HepG2 (cell line): ENCODE measurements at regions of chr1 and their contacts with region 1.

Region 1: DNA sequence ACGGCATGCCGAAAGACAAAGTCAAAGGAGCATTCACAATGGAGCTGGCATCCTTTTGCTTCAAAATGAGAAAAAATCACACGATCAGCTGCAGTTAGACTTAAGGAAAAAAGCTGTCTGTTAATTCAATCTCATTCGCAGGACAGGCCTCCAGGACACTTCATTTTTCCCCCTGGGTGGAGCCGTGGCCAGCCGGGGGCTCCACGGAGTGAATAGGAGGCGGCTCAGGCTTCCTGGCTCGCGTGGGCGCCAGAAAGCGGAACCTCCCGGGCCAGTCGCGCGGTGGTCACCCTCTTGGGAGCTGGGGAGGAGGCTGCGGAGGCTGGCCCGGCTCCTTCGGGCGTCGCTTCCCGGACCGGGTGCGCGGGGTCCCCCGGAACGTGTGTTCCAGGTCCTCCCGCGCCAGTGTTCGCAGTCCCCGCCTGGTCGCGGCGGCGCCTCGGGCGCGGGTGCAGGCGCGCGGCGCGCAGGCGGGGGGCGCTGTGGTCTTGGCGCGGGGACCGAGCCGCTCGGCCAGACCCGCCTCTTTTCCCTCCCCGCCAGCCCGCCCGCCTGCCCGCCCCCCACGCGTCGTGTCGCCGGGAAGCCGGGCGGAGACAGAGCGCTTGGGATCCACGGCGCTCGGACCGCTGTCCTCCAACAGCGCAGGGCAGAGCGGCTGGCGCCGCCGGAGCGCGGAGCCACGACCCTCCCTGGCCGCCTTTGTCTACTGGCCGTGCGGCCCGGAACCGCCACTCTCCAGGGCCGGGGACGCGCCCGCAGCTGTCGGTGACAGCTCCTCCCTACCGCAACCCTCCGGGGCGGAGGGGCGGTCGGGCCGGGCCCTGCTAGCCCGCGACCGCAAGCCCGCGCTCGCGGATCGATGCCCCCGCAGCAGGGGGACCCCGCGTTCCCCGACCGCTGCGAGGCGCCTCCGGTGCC is at the start of gene RHOU:
- DNase-seq: peak; percentile 20
- ATAC-seq: peak; percentile 90
- H3K4me3 ChIP-seq: peak within 1 kb of the TSS; percentile 85 to 94 (median 86)
- H3K27ac ChIP-seq: peak within 1 kb of the TSS; percentile 61
- H3K4me1 ChIP-seq: peaks cover 39% of the 10 kb centered on the region
- H3K27me3 ChIP-seq: peaks cover 2 to 12% of the 10 kb centered on the region in 2 experiments; a peak in 4 of 5 replicates
- CTCF ChIP-seq: peak; percentile 67
- EP300 ChIP-seq: 0 out of 4 replicates have a peak, but pooled peaks of 1 of the 2 experiments have one; percentile 16
- POLR2A ChIP-seq: peak; percentile 59 to 65
- RAD21 ChIP-seq: peak; percentile 95
- total RNA-seq, gene RHOU: 18.5 and 23.6 TPM in 2 replicates

Region 2: DNA sequence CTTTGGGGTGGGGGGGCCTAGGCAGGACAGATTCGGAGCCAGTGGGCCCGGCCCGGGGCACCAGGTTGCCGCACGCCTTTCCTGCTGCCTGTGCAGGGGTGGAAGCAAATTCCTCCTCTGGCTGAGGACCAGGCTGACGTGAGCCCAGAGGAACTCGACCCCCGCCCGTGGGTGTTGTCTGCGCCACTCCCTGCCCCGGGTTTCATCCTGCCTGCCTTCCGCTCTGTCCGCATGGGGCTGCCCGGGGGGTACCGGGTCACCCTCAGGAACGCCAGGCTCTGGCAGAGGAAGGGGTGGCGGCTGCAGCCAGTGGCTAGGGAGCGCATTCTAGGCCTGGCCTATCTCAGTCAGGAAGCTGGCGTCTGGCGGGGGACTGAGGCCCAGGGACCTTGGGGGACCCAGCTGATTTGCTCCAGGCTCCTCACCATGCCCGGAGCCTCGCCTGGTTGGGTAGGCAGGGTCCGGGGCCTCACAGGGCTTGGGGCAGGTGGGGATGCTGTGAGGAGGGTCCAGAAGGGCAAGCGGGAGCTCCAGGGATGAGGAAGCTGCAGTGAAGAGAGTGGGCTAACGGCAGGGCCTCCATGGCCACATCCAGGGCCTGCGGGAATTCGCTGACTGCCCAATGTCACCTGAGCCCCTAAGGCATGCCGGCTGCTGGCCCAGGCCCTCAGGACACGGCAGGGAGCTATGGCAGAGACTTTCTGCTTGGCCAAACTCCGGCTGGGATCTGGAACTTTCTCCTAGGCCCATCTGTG is 572.0 kb before region 1 on chr1:
- CTCF ChIA-PET with region 1: no interaction called
- POLR2A ChIA-PET with region 1: no interaction called
- in situ Hi-C with region 1: no loop called
- intact Hi-C with region 1: no loop called
- DNase-seq: no peak
- ATAC-seq: no peak
- H3K4me3 ChIP-seq: no peak overlapping the region; a peak in 1 of 6 replicates
- H3K27ac ChIP-seq: no peak overlapping the region
- H3K4me1 ChIP-seq: peaks cover 62% of the 10 kb centered on the region
- H3K27me3 ChIP-seq: no peaks in the 10 kb centered on the region; a peak in 1 of 5 replicates
- CTCF ChIP-seq: no peak
- EP300 ChIP-seq: no peak
- POLR2A ChIP-seq: no peak
- RAD21 ChIP-seq: no peak

Region 3: GRCh38 chr1:228664399-228664914 is 70.7 kb before region 1 on chr1:
- CTCF ChIA-PET with region 1: interaction called, 3 read pairs
- POLR2A ChIA-PET with region 1: no interaction called
- in situ Hi-C with region 1: no loop called
- intact Hi-C with region 1: loop called (anchors 1 kb)
- DNase-seq: peak; percentile 68
- ATAC-seq: peak; percentile 62; the same call in 2 of the 3 replicates
- H3K4me3 ChIP-seq: peak overlapping the region in 2 of 3 experiments; percentile 34 to 40; a peak in 2 of 6 replicates
- H3K27ac ChIP-seq: no peak overlapping the region
- H3K4me1 ChIP-seq: peaks cover 17% of the 10 kb centered on the region
- H3K27me3 ChIP-seq: no peaks in the 10 kb centered on the region
- CTCF ChIP-seq: peak; percentile 85
- EP300 ChIP-seq: no peak
- POLR2A ChIP-seq: no peak
- RAD21 ChIP-seq: peak; percentile 89

Region 4: GRCh38 chr1:228860911-228861831 is 126.0 kb after region 1 on chr1:
- CTCF ChIA-PET with region 1: no interaction called
- POLR2A ChIA-PET with region 1: interaction called, 10 read pairs
- in situ Hi-C with region 1: no loop called
- intact Hi-C with region 1: loop called (anchors 1 kb)
- DNase-seq: peak; percentile 97
- ATAC-seq: peak; percentile 90
- H3K4me3 ChIP-seq: peak overlapping the region in 1 of 3 experiments; percentile 8; a peak in 1 of 6 replicates
- H3K27ac ChIP-seq: peak overlapping the region; percentile 69
- H3K4me1 ChIP-seq: peaks cover 99% of the 10 kb centered on the region
- H3K27me3 ChIP-seq: no peaks in the 10 kb centered on the region
- CTCF ChIP-seq: no peak
- EP300 ChIP-seq: peak; percentile 50 to 89; a peak in 3 of 4 replicates
- POLR2A ChIP-seq: no peak
- RAD21 ChIP-seq: no peak; the same call in 1 of the 2 replicates

Region 5: DNA sequence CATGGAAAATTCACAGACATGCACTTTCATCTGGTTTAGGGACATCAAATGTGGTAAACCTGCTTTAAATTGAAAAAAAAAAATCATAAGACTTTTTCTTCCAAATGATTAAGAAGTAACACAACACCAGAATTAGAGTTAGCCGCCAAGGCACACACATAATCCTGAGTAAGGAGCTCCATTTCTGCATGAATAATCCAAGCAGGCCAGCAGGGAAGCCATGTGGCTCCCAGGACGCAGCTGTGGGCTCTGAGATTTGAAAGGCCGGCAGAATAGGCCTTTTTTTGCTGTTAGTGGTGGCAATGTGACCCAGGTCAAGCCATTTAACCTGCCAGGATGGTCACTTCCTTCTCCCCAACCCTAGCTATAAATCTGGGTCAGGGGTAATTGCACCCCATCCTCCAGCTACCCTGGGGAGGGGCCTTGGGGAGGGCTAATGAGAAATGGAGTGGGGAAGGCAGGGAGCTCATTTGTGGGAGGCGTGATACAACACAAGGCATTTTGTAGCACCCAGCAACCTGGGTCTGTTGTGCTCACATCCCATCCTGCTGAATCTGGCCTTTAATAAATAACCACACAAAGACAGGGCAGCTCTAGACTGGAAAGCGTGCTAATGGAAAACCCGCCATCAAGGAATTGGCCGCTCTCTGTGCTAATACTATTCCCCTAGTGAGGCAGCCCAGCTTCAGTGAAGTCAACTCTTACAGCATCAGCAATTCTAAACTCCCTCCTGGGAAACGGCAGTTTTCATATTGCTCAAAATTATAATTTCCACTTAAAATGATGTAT is 178.7 kb after region 1 on chr1:
- CTCF ChIA-PET with region 1: no interaction called
- POLR2A ChIA-PET with region 1: no interaction called
- in situ Hi-C with region 1: no loop called
- intact Hi-C with region 1: no loop called
- DNase-seq: no peak
- ATAC-seq: no peak
- H3K4me3 ChIP-seq: no peak overlapping the region
- H3K27ac ChIP-seq: no peak overlapping the region
- H3K4me1 ChIP-seq: peaks cover 29% of the 10 kb centered on the region
- H3K27me3 ChIP-seq: peaks cover 0 to 3% of the 10 kb centered on the region in 2 experiments; a peak in 2 of 5 replicates
- CTCF ChIP-seq: no peak
- EP300 ChIP-seq: no peak
- POLR2A ChIP-seq: no peak
- RAD21 ChIP-seq: no peak

Region 6: GRCh38 chr1:229059671-229060539 is 324.8 kb after region 1 on chr1:
- CTCF ChIA-PET with region 1: no interaction called
- POLR2A ChIA-PET with region 1: no interaction called
- in situ Hi-C with region 1: no loop called
- intact Hi-C with region 1: loop called (anchors 5 kb)
- DNase-seq: no peak
- ATAC-seq: peak; percentile 28
- H3K4me3 ChIP-seq: no peak overlapping the region
- H3K27ac ChIP-seq: peak overlapping the region; percentile 4
- H3K4me1 ChIP-seq: peaks cover 73% of the 10 kb centered on the region
- H3K27me3 ChIP-seq: no peaks in the 10 kb centered on the region
- CTCF ChIP-seq: no peak
- EP300 ChIP-seq: no peak
- POLR2A ChIP-seq: no peak
- RAD21 ChIP-seq: no peak

Region 7: GRCh38 chr1:229227298-229227919 is 492.3 kb after region 1 on chr1:
- CTCF ChIA-PET with region 1: no interaction called
- POLR2A ChIA-PET with region 1: interaction called, 6 read pairs
- in situ Hi-C with region 1: loop called (anchors 10 kb)
- intact Hi-C with region 1: loop called (anchors 1 kb)
- DNase-seq: peak; percentile 63
- ATAC-seq: peak; percentile 51
- H3K4me3 ChIP-seq: no peak overlapping the region
- H3K27ac ChIP-seq: no peak overlapping the region
- H3K4me1 ChIP-seq: peaks cover 92% of the 10 kb centered on the region
- H3K27me3 ChIP-seq: no peaks in the 10 kb centered on the region
- CTCF ChIP-seq: peak; percentile 91
- EP300 ChIP-seq: peak in 1 of 2 experiments; percentile 23; a peak in 1 of 4 replicates
- POLR2A ChIP-seq: no peak
- RAD21 ChIP-seq: peak; percentile 90